RWPE1 (cell line): ENCODE measurements at regions of chr15 and their contacts with region 1.

Region 1: GRCh38 chr15:98518823-98519561 is 129.3 kb upstream of the IGF1R start:
- DNase-seq: peak; percentile 75
- H3K27ac ChIP-seq: no peak overlapping the region
- CTCF ChIP-seq: peak; percentile 97

Region 2: DNA sequence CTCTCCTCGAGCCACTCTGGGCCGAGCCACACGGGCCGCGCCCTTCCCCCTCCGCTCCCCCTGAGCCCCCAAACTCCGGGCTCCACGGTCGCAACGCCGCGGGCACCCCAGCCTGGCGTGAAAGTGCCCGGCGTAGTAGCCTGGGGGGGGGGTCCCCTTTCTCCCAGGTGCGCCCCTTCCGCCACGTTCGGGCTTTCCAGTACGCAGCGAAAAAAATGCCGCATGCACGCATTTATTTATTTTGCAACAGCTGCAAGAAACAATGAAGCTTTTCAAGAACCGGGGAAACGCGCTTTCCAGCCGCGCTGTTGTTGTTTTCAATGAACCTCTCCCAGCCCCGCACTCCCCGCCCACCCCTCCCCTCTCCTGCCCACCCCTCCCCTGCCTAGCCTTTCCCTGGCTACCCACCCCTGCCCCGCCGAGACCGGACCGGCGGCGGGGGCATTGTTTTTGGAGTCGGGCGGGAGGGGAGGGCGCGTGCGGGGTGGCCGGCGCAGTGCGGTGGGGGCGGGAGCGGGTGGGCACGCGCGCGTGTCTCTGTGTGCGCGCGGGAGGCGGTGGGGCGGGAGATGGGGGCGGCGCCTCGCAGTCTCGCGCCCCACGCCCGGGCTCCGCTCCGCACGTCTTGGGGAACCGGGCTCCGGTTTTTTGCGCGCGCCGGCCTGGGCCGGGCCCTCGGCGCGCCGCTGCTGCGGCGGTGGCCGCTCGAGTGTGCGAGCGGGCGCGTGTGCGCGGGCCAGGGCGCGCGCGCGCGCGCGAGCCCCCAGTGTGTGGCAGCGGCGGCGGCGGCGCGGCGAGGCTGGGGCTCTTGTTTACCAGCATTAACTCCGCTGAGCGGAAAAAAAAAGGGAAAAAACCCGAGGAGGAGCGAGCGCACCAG is 129.0 kb after region 1 on chr15 and contains the start of gene IGF1R:
- CTCF ChIA-PET with region 1: interaction called, 10 read pairs
- POLR2A ChIA-PET with region 1: interaction called, 3 read pairs
- DNase-seq: peak; percentile 78
- H3K27ac ChIP-seq: peak within 1 kb of the TSS; percentile 99
- CTCF ChIP-seq: peak; percentile 60

Region 3: GRCh38 chr15:98703126-98703685 is 184.2 kb after region 1 on chr15:
- CTCF ChIA-PET with region 1: no interaction called
- POLR2A ChIA-PET with region 1: no interaction called
- DNase-seq: no peak
- H3K27ac ChIP-seq: no peak overlapping the region
- CTCF ChIP-seq: no peak

Region 4: GRCh38 chr15:98794754-98795153 is 275.8 kb after region 1 on chr15:
- CTCF ChIA-PET with region 1: no interaction called
- POLR2A ChIA-PET with region 1: no interaction called
- DNase-seq: no peak
- H3K27ac ChIP-seq: no peak overlapping the region
- CTCF ChIP-seq: no peak